ENCODE measurements at regions of chr15 and their contacts with region 1.

Region 1: GRCh38 chr15:90482124-90483011 is 47.4 kb upstream of the CRTC3 start:
- DNase-seq: peak; percentile 35 to 64
- ATAC-seq: peak; percentile 83 to 87; a peak in 5 of 6 replicates
- H3K4me3 ChIP-seq: no peak overlapping the region
- H3K27ac ChIP-seq: no peak overlapping the region
- H3K4me1 ChIP-seq: no peaks in the 10 kb centered on the region
- CTCF ChIP-seq: peak; percentile 98
- EP300 ChIP-seq: no peak
- POLR2A ChIP-seq: no peak
- RAD21 ChIP-seq: peak; percentile 98

Region 2: DNA sequence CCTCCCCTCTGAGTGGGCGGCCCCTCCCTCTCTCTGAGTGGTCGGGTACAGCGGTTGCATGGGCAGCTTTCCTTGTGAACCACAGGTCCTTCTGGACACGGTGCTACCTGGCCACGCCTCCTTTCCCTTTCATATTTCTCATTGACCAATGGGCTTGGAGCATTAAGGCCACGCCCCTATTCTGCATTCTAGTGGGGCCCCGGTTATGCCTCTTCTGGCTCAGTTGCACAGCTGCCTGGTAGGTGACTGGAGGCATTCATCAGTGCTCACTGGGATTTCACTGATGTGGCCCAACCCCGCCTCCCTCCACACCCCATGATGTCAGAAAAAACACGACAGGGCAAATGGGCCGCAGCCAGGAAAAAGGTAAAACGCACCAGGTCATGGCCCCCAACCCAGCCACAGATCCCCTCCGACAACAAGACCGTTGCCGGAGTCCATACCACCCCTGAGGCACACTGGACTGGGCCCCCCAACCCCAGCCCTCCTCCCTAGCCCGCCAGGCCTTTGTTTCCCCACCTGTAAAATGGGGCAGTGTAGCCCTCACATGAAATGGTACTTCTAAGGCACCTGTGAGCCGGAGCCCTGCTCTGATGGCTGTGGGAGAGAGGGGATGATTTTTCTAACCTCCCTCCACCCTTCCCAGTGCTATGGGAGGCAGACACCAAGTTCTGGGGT is 190.6 kb before region 1 on chr15:
- CTCF ChIA-PET with region 1: interaction called, 32 read pairs
- POLR2A ChIA-PET with region 1: no interaction called
- DNase-seq: peak; percentile 62 to 71
- ATAC-seq: peak; percentile 32 to 66; a peak in 3 of 6 replicates
- H3K4me3 ChIP-seq: no peak overlapping the region
- H3K27ac ChIP-seq: no peak overlapping the region
- H3K4me1 ChIP-seq: no peaks in the 10 kb centered on the region
- CTCF ChIP-seq: no peak
- EP300 ChIP-seq: no peak; a peak in 1 of 5 replicates
- POLR2A ChIP-seq: no peak
- RAD21 ChIP-seq: no peak

Region 3: DNA sequence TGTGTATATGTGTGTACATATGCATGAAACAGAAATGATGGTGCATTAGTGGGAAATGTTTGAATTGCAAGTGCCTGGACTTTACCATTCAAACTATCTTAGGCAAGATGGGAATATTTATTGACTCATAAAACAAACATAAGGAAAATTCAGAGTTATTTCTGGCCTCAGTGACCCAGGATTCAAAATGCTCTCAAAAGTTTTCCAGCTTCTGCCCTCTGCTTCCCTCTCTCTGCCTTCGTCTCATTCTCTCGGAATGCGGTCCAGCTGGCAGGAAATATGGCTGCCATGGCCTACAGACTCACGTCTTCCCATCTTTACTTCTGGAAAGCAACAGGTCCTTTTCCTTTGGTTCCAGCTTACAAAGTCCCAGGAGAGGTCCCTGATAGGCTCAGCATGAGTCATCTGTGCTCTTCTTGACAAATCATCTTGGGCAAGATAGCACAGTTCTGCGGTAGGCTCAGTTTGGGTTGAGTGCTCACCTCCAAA is 139.0 kb before region 1 on chr15:
- CTCF ChIA-PET with region 1: interaction called, 11 read pairs
- POLR2A ChIA-PET with region 1: no interaction called
- DNase-seq: peak in 1 of 2 experiments; percentile 43
- ATAC-seq: peak; percentile 41 to 62; a peak in 4 of 6 replicates
- H3K4me3 ChIP-seq: no peak overlapping the region
- H3K27ac ChIP-seq: no peak overlapping the region
- H3K4me1 ChIP-seq: peaks cover 13% of the 10 kb centered on the region
- CTCF ChIP-seq: no peak
- EP300 ChIP-seq: no peak
- POLR2A ChIP-seq: no peak
- RAD21 ChIP-seq: no peak

Region 4: DNA sequence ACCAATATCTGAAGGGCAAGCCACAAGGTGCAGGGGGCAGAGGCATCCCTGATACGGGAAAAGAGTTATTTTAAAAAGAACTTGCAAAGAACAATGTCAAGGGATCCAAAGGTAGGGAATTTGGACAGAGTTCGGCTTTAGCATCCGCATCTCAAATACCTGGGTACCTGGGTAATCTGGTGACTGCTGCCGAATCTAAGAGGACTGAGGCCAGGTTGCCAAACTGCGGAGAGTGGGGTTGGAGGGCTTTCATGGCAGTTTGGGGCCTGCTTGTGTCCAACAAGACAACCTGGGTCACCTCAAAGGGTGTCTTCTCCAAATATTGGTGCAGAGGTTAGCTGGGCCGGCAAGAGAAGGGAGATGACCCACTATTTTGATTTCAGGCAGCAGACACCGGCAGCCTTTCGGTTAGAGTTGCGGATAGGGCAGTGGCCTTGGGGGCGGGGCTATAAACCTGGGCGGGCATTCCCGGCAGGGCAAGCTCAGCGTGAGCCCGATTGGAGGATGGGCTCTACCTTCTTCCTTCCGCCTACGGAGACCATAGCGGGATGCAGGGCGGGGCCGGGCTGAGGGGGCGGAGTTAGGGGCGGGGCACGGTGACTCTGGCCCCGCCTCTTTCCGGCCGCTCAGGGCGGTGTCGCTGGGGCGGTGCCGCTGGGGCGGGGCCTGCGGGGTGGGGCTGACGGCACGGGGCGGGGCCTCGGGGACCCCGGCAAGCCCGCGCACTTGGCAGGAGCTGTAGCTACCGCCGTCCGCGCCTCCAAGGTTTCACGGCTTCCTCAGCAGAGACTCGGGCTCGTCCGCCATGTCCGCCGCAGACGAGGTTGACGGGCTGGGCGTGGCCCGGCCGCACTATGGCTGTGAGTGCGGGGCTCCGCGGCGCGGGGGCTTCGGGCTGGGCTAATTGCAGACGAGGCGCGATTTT is 94.6 kb before region 1 on chr15 and contains the start of gene IQGAP1:
- CTCF ChIA-PET with region 1: interaction called, 22 read pairs
- POLR2A ChIA-PET with region 1: no interaction called
- DNase-seq: peak; percentile 98
- ATAC-seq: peak; percentile 96 to 97
- H3K4me3 ChIP-seq: peak within 1 kb of the TSS; percentile 78
- H3K27ac ChIP-seq: peak within 1 kb of the TSS; percentile 93 to 95
- H3K4me1 ChIP-seq: peaks cover 10% of the 10 kb centered on the region; the same call in 2 of the 3 replicates
- CTCF ChIP-seq: no peak
- EP300 ChIP-seq: no peak
- POLR2A ChIP-seq: peak; percentile 94
- RAD21 ChIP-seq: peak in 1 of 2 experiments; percentile 37; a peak in 2 of 5 replicates
- polyA plus RNA-seq, gene IQGAP1: 168 and 181 TPM in 2 replicates

Region 5: GRCh38 chr15:90442423-90442822 is 39.9 kb before region 1 on chr15:
- CTCF ChIA-PET with region 1: interaction called, 17 read pairs
- POLR2A ChIA-PET with region 1: no interaction called
- DNase-seq: no peak
- ATAC-seq: no peak
- H3K4me3 ChIP-seq: no peak overlapping the region
- H3K27ac ChIP-seq: no peak overlapping the region
- H3K4me1 ChIP-seq: no peaks in the 10 kb centered on the region
- CTCF ChIP-seq: no peak
- EP300 ChIP-seq: no peak
- POLR2A ChIP-seq: no peak
- RAD21 ChIP-seq: no peak

Region 6: GRCh38 chr15:90471769-90472168 is 10.6 kb before region 1 on chr15:
- CTCF ChIA-PET with region 1: interaction called, 46 read pairs
- POLR2A ChIA-PET with region 1: no interaction called
- DNase-seq: no peak
- ATAC-seq: no peak
- H3K4me3 ChIP-seq: no peak overlapping the region
- H3K27ac ChIP-seq: no peak overlapping the region
- H3K4me1 ChIP-seq: no peaks in the 10 kb centered on the region
- CTCF ChIP-seq: no peak
- EP300 ChIP-seq: no peak
- POLR2A ChIP-seq: no peak
- RAD21 ChIP-seq: no peak

Region 7: GRCh38 chr15:90686435-90687218 is 204.3 kb after region 1 on chr15:
- CTCF ChIA-PET with region 1: no interaction called
- POLR2A ChIA-PET with region 1: no interaction called
- DNase-seq: no peak
- ATAC-seq: no peak
- H3K4me3 ChIP-seq: no peak overlapping the region
- H3K27ac ChIP-seq: no peak overlapping the region
- H3K4me1 ChIP-seq: no peaks in the 10 kb centered on the region
- CTCF ChIP-seq: no peak
- EP300 ChIP-seq: no peak
- POLR2A ChIP-seq: no peak
- RAD21 ChIP-seq: no peak

Region 8: DNA sequence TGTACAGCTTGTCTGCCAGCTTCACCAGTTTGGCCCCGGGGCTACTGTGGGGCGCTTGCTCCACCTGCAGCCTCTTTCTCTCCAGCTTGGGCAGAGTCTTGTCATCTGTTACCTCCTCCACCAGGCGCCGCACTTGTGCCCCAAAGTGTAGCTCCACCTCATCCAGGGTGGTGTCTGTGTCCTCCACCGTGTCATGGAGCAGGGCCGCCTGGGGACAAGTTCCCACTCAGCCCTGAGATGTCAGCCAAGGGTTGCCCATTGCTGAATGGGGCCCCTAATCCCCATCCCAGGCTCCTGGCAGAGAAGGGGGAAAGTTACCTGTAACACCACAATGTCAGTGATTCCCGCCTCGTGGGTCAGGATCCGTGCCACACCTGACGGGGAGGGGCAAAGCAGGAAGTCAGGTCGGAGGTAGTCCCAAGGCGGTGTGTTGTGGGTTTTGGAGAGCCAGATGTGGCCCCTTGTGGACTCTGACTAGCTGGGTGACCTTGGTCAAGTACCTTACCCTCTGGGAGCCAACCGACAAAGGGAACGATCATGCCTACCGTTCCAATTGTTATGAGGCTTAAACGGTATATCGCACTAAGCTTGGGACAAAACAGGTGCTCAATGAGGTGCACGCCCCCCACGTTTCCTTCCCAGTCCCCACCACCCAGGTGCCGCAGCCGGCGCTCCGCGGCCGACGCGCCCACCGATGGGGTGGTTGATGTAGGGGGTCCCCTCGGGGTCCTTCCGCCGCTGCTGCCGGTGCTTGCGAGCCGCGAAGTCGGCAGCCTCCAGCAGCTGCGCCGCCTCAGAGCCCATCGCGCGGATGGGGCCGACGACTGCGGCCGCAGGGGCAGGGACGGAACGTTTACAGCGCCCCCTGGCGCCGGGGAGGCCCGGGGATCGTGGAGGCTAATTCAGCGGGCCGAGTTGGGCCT is 449.6 kb after region 1 on chr15 and contains the start of gene HDDC3:
- CTCF ChIA-PET with region 1: interaction called, 10 read pairs
- POLR2A ChIA-PET with region 1: no interaction called
- DNase-seq: peak; percentile 94 to 98
- ATAC-seq: peak; percentile 67 to 77
- H3K4me3 ChIP-seq: peak within 1 kb of the TSS; percentile 69
- H3K27ac ChIP-seq: peak within 1 kb of the TSS; percentile 84 to 93
- H3K4me1 ChIP-seq: peaks cover 35% of the 10 kb centered on the region
- CTCF ChIP-seq: peak; percentile 95
- EP300 ChIP-seq: no peak
- POLR2A ChIP-seq: peak; percentile 73
- RAD21 ChIP-seq: peak; percentile 26 to 39
- polyA plus RNA-seq, gene HDDC3: 29.8 and 31.9 TPM in 2 replicates